Psoas muscle (tissue), 8 donors: ENCODE measurements at regions of chr3 and their contacts with region 1.

Region 1: DNA sequence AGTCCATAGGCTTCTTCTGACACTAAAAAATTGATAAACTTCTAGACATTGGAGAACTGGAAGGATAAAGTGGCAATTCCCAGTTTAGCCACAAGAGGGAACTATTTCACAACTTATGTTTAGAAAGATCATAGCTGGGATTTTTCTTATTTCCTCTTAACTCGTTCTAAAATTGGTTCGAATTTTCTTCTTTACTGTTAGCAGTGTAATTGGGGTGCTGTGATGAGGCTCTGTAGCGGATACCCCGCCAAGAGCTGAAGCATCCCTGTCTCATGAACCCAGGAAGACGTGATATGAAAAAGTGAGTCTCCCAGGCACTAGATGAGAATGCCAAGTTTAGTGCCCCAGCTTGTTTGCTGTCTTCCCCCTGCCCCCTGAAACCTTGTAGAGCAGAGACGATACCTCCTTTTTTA is 85.1 kb downstream of the PDCD6IP start:
- DNase-seq: no peak
- ATAC-seq: peak in 3 of 4 donors; percentile 13 to 65 (median 44)
- H3K4me3 ChIP-seq: peak overlapping the region; percentile 54
- H3K27ac ChIP-seq: no peak overlapping the region
- H3K4me1 ChIP-seq: peaks cover 17% of the 10 kb centered on the region
- H3K27me3 ChIP-seq: no peaks in the 10 kb centered on the region
- CTCF ChIP-seq: peak; percentile 92

Region 2: GRCh38 chr3:34387826-34388564 is 504.5 kb after region 1 on chr3:
- intact Hi-C with region 1: loop called in 1 of 2 experiments (anchors 10 kb)
- DNase-seq: no peak
- ATAC-seq: no peak
- H3K4me3 ChIP-seq: no peak overlapping the region
- H3K27ac ChIP-seq: no peak overlapping the region
- H3K4me1 ChIP-seq: no peaks in the 10 kb centered on the region
- H3K27me3 ChIP-seq: no peaks in the 10 kb centered on the region
- CTCF ChIP-seq: no peak

Region 3: GRCh38 chr3:34683851-34684250 is 800.3 kb after region 1 on chr3:
- intact Hi-C with region 1: loop called (anchors 5 to 10 kb)
- DNase-seq: peak; percentile 33 to 59
- ATAC-seq: no peak
- H3K4me3 ChIP-seq: no peak overlapping the region
- H3K27ac ChIP-seq: no peak overlapping the region
- H3K4me1 ChIP-seq: no peaks in the 10 kb centered on the region
- H3K27me3 ChIP-seq: no peaks in the 10 kb centered on the region
- CTCF ChIP-seq: peak; percentile 41